Tibial artery (tissue), 4 donors: ENCODE measurements at regions of chr4 and their contacts with region 1.

Region 1: DNA sequence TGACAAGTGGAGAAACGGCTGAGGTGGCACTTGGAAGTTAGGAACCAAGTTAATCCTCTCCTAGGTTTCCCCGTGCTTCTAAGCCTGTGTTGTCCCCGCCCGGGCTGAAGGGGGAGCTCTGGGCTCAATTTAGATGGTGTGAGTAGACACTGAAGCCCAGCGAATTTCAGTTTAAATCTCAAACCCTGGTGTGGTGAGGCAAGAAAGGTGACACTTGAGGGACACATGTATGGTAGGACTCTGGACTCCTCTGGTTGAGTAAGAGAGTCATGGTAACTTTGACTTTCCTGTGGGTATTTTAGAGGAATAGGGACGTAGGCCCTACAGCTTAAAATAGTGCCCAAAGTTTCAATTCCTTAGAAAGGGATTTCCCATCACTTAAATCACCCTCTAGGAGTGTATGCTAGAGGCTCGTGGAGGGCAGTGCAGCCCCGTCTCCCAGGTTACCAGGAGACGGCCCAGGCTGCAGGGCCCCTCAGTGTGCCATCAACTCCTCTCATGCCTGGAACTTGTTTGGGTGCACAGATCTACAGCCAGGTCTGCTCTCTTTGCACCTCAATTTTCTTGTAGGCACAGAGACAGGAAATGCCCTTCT is 24.0 kb downstream of the HAND2 start:
- DNase-seq: peak; percentile 66 to 82
- H3K4me3 ChIP-seq: peak overlapping the region; percentile 13 to 25
- H3K27ac ChIP-seq: peak overlapping the region in 1 of 2 donors; percentile 10
- H3K4me1 ChIP-seq: peaks cover 0 to 33% (median 16%) of the 10 kb centered on the region in 4 donors
- H3K27me3 ChIP-seq: peaks cover 0 to 26% of the 10 kb centered on the region in 2 donors
- CTCF ChIP-seq: peak; percentile 74 to 83

Region 2: DNA sequence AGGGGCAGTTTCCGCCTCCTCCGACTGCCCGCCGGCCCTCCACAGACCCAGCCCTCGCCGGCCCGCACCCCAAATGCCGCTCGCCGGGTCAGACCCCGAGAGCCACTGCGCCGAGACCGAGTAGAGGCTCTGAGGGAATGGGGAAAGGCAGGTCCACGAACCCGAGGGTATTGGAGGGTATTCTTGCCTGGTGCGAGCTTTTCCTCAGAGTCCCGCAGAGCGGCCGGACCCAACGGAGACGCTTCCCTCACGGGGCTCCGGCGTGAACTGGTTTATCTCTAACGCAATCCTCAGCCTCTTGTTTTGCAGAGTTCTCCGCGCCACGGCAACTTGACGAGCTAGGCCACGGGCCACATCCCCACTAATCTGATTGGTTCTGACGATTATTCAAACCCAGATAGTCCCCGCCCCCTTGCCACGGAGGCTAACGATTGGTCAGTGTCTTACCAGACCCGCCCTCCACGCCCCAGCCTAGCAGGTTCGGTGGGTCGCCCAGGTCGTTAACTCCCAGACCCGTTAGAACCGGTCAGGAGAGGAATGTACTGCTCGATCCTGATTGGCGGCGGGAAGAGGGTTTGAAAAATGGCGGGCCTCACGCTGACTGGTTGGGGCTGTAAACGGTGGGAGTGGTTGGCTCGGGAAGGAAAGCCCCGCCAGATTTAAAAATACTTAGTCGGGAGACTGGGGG is 171.8 kb before region 1 on chr4 and contains the start of gene HMGB2:
- intact Hi-C with region 1: loop called (anchors 10 kb)
- DNase-seq: peak; percentile 100
- H3K4me3 ChIP-seq: peak within 1 kb of the TSS; percentile 92 to 98
- H3K27ac ChIP-seq: peak within 1 kb of the TSS; percentile 100
- H3K4me1 ChIP-seq: peaks cover 0 to 32% (median 17%) of the 10 kb centered on the region in 4 donors
- H3K27me3 ChIP-seq: no peaks in the 10 kb centered on the region
- CTCF ChIP-seq: no peak

Region 3: DNA sequence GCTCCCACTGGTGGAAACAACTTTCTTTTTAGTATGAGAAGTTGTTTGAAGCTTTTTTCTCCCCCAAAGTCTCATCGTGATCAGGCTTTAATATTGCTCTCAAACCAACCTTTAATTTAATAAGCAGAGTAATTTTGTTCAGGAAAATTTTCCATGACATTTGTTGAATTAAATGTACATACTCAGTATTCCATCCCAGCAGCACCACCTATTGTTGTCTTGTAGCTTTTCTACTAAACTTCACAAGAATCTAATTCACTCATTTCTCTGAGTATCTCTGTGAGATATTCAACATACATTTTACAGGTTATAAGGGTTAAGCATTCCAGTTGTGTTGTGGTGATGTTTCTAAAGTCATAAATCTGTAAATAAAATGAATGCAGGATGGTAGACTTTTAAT is 242.3 kb after region 1 on chr4:
- intact Hi-C with region 1: loop called (anchors 5 kb)
- DNase-seq: no peak
- H3K4me3 ChIP-seq: no peak overlapping the region
- H3K27ac ChIP-seq: no peak overlapping the region
- H3K4me1 ChIP-seq: no peaks in the 10 kb centered on the region
- H3K27me3 ChIP-seq: no peaks in the 10 kb centered on the region
- CTCF ChIP-seq: peak; percentile 39 to 44

Region 4: DNA sequence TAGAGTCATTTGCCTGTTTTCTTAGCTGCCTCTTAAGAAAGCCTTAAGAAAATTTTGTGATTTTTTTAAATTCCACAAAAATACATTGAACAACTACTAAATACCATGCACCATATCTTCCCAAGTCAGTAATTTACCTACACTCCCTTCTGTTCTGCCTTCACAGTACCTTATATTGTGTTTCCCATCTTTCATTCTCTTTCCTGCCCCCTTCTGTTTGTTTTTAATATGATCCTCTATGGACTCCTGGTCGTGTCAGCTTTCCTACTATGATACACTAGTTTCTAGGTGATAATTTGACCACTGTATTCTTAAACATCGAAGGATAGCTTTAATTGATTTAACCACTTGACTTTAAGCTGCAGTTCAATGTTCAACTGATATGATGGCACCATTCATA is 321.7 kb after region 1 on chr4:
- intact Hi-C with region 1: loop called (anchors 10 kb)
- DNase-seq: no peak
- H3K4me3 ChIP-seq: no peak overlapping the region
- H3K27ac ChIP-seq: no peak overlapping the region
- H3K4me1 ChIP-seq: no peaks in the 10 kb centered on the region
- H3K27me3 ChIP-seq: no peaks in the 10 kb centered on the region
- CTCF ChIP-seq: peak in 1 of 2 experiments; percentile 10

Region 5: DNA sequence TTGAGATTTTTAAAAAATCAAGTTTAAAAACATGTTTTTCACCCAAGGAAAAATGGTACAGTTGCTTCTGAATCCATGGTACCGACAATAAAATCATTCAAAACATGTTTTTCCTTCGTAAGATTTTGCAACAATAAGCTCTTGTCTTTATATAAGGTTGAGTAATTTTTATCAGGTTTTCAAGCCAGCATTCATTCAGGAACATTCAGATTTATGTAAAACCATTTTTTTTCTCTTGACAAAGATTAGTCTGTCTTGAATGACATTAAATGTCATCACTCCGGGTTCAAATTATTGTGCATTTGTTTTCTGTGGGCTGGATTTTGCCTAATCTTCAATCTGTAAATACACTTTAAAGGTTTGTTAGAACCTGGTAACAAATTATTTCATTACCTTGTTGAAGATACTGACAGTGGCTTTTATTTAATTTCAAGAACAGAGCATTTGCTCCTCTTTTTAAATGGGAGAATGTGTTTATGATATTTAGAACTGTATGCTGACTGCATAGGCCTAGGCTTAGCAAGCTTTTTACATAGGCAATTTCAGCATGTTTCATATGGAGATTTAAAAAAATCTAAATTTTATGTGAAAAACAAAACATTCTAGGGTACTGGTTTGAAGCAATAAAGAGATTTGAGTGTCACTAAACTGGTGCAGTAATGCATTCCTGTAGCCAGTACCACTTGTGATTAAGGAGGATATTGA is 360.5 kb after region 1 on chr4:
- intact Hi-C with region 1: no loop called
- DNase-seq: no peak
- H3K4me3 ChIP-seq: no peak overlapping the region
- H3K27ac ChIP-seq: no peak overlapping the region
- H3K4me1 ChIP-seq: no peaks in the 10 kb centered on the region
- H3K27me3 ChIP-seq: no peaks in the 10 kb centered on the region
- CTCF ChIP-seq: no peak

Region 6: DNA sequence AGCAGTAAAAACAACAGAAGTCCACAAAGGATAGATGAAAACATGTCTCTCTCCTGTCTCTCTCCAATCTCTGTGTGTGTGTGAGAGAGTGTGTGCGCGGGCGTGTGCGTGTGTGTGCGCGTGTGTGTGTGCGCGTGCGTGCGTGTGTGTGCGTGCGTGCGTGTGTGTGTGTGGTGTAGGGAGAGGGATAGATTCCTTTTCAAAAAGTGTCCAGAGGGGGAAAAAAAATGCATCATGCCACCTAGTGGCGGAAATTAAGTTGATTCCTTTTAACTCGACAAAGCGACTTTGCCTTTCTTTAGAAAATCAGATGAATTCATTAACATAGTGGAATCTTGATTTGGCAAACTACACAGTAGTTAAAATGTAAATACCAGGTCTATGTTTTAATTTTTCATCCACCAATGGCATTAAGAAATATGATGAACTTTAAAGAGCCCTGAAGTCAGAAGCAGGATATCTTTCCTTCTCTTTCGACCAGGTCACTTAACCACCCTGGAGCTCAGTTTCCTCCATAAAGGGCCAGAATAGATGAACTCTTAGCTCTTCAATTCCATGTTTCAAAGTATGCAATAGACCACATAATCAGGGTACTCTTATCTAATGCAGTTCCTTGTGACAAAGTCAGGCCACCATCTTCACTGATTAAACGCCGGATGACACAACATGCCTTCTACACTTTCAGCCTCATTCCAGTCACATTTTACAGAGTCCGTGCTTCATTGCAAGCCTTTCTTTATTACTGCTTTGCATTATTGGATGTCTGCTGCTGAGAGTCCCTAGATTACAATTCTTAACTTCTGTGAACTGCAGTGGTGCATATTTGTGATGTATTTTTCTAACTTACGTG is 614.6 kb after region 1 on chr4:
- intact Hi-C with region 1: loop called (anchors 10 kb)
- DNase-seq: peak; percentile 32 to 65
- H3K4me3 ChIP-seq: peak overlapping the region; percentile 39 to 42
- H3K27ac ChIP-seq: no peak overlapping the region
- H3K4me1 ChIP-seq: peaks cover 0 to 6% (median 0%) of the 10 kb centered on the region in 4 donors
- H3K27me3 ChIP-seq: no peaks in the 10 kb centered on the region
- CTCF ChIP-seq: peak; percentile 48 to 57

Region 7: DNA sequence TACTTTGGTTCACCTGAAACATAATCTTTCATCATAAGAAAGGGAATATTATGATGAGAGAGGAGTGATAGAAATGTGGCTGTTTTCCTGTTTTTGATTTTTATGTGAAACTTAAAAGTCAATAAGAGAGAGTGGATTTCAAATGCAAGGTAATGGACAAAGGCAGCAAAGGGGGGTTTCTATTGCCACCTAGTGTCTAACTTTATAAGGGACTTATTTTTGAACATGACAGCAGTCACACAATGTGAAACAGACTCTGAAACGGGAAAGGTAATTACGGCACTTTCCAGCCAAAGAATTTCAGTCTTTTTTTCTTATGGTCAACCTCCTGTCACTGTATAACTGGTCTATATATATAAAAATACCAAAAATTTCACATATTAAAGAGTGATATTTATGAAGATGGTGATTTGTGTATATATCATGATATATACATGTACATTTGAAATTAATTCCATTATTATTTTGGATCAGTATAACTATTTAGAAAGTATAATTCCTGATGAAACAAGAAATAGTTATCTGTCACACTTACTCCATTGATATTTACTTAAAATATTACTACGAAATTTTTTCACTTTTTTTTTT is 650.3 kb after region 1 on chr4:
- intact Hi-C with region 1: loop called (anchors 5 kb)
- DNase-seq: no peak
- H3K4me3 ChIP-seq: no peak overlapping the region
- H3K27ac ChIP-seq: no peak overlapping the region
- H3K4me1 ChIP-seq: no peaks in the 10 kb centered on the region
- H3K27me3 ChIP-seq: no peaks in the 10 kb centered on the region
- CTCF ChIP-seq: peak; percentile 43 to 59